Panc1 (cell line): ENCODE measurements at regions of chr6 and their contacts with region 1.

Region 1: DNA sequence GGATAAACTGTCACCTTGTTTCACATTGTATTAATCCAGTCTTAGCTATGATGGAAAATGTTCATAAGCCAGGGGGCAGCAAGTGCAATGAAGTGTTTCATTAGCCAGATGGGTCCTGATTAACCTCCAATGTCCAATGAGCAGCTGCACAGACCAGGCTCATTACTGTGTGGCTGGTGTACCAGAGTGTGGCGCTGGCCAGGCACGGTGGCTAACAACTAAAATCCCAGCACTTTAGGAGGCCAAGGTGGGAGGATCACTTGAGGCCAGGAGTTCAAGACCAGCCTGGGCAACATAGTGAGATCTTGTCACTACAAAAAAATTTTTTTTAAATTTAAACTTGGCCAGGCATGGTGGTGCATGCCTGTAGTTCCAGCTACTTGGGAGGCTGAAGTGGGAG is 201.7 kb upstream of the FOXQ1 start:
- DNase-seq: no peak
- ATAC-seq: no peak
- H3K4me3 ChIP-seq: no peak overlapping the region
- H3K27ac ChIP-seq: no peak overlapping the region
- H3K4me1 ChIP-seq: no peaks in the 10 kb centered on the region
- H3K27me3 ChIP-seq: no peaks in the 10 kb centered on the region
- CTCF ChIP-seq: no peak; the same call in 1 of the 2 replicates

Region 2: DNA sequence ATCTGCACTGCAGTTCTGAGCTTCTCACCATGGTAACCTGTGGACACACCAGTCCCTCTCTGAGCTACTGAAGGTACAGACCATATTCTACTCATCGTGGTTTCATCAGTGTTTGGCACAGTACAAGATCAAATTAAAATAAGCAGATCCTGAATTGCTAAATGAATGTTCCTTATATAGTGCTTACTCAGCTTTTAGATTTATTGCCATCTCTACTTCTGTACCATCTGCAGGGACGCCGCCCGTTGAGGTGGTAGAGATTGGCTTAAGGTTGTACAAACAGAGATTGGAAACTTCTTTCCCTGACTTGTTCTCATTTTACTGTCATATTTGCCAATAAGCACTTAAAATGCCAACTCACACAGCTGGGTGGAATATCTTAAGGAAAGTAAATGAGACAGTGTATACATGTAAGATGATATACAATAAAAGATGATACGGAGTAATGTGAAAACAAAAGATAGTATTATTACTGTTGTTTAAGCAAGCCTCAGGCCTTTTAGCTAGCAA is 21.6 kb before region 1 on chr6:
- CTCF ChIA-PET with region 1: no interaction called
- POLR2A ChIA-PET with region 1: no interaction called
- in situ Hi-C with region 1: no loop called
- intact Hi-C with region 1: loop called (anchors 1 kb)
- DNase-seq: no peak
- ATAC-seq: no peak
- H3K4me3 ChIP-seq: no peak overlapping the region
- H3K27ac ChIP-seq: no peak overlapping the region
- H3K4me1 ChIP-seq: no peaks in the 10 kb centered on the region
- H3K27me3 ChIP-seq: no peaks in the 10 kb centered on the region
- CTCF ChIP-seq: no peak

Region 3: DNA sequence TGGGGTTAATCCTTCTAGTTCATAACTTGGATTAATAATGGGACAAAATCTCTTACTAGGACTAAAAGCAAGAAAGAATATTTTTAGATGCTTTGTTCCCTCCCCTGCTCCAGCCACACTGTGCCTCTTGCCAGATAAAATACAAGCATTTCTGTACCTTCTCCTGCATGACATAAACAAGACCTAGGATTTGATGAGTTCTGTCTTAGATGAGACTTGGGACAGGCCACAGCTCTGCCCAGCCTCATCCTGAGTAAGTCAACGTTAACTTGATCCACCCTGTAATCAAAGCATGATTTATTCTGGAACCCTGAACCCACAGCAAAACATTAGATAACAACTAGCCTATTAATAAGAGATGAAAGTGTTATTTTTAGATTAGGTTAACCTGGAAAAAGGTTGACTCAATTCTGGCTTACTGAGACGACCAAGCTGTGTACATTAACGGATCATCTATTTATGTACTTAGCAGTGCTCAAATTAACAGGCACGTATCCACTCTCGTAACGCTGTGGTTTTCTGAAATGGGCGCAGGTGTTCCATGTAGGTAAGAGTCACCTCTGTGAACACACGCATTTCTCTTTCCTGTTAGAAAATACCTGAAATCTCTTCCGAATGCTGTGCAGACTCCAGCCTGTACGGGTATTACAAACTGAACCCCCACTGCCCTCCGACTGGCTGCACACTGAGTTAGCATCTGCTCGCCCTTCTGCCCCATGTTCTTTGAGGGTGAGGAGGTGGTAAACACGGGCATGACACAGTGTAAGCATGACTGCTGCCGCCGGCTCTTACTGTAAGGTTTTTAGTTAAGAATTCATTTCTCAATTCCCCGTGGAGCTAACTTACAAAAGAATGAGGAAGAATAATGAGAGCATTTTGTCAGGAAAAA is 69.7 kb after region 1 on chr6:
- CTCF ChIA-PET with region 1: no interaction called
- POLR2A ChIA-PET with region 1: no interaction called
- in situ Hi-C with region 1: no loop called
- intact Hi-C with region 1: no loop called
- DNase-seq: no peak
- ATAC-seq: no peak
- H3K4me3 ChIP-seq: no peak overlapping the region
- H3K27ac ChIP-seq: no peak overlapping the region
- H3K4me1 ChIP-seq: no peaks in the 10 kb centered on the region
- H3K27me3 ChIP-seq: peaks cover 2% of the 10 kb centered on the region
- CTCF ChIP-seq: no peak